Activated CD4-positive, alpha-beta memory T cell treated with anti-CD3 and anti-CD28 coated beads, Interleukin-2, amount 10 ng/mL, durations not matched to agents 7 days and 5 days (primary cell): ENCODE measurements at regions of chr17 and their contacts with region 1.

Region 1: DNA sequence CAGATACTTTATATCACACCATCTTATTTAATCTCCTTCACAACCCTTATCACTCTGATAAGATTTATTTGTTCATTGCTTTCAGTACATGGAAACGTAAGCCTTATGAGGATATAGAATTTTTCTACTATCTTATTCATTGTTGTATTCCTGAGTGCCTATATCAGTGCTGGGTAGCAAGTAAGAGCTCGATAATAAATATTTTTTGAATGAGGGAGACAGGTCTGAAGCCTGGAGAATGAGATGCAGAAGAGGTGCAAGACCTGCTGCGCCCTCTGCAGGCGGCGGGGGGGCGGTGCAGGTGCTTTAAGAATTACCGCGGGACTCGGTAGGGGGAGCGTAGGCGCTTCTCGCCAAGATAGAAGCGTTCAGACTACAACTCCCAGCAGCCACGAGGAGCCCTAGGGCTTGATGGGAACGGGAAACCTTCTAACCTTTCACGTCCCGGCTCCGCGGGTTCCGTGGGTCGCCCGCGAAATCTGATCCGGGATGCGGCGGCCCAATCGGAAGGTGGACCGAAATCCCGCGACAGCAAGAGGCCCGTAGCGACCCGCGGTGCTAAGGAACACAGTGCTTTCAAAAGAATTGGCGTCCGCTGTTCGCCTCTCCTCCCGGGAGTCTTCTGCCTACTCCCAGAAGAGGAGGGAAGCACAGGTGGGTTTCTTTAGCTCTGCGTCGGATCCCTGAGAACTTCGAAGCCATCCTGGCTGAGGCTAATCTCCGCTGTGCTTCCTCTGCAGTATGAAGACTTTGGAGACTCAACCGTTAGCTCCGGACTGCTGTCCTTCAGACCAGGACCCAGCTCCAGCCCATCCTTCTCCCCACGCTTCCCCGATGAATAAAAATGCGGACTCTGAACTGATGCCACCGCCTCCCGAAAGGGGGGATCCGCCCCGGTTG is at the start of gene WRAP53:
- DNase-seq: peak; percentile 97
- H3K4me3 Mint-ChIP-seq: peak within 1 kb of the TSS; percentile 94
- H3K27ac Mint-ChIP-seq: peak within 1 kb of the TSS; percentile 96
- H3K4me1 Mint-ChIP-seq: peaks cover 39% of the 10 kb centered on the region
- H3K27me3 Mint-ChIP-seq: no peaks in the 10 kb centered on the region
- total RNA-seq, gene WRAP53: 18.6 to 18.8 TPM

Region 2: DNA sequence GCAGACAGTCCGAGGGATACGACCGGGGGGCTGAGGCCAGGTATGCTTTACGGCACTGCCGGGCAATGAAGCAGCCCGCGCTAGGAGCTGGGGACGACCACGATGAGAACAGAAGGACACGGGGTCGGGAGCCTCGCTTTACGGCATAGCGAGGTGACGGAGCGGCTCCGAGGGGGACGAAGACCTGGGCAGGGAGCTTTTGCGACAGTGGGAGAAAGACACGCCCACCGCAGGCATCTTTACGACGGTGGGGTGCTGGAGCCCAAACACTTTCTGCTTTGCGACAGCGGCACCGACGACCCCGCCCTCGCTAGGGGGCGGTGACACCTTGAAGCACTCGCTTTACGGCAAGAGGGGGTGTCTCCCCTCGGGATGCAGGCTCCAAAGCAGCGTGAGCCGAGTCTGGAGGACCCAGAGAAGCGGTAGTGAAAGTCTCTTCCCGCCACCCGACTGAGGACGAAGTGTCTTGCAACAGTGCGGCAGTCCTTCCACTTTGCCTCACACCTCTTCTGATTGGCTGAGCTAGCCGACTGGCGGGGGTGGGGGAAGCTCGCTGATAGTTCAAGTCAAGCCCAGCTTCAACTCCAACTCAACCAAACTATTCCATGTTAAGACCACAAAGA is 358.7 kb before region 1 on chr17:
- CTCF ChIA-PET with region 1: interaction called, 9 read pairs
- POLR2A ChIA-PET with region 1: interaction called, 10 read pairs
- DNase-seq: peak; percentile 97
- H3K4me3 Mint-ChIP-seq: peak overlapping the region; percentile 85
- H3K27ac Mint-ChIP-seq: peak overlapping the region; percentile 93
- H3K4me1 Mint-ChIP-seq: peaks cover 49% of the 10 kb centered on the region
- H3K27me3 Mint-ChIP-seq: no peaks in the 10 kb centered on the region

Region 3: GRCh38 chr17:7561028-7561575 is 127.1 kb before region 1 on chr17:
- CTCF ChIA-PET with region 1: interaction called, 17 read pairs
- POLR2A ChIA-PET with region 1: interaction called, 26 read pairs
- DNase-seq: peak; percentile 85
- H3K4me3 Mint-ChIP-seq: peak overlapping the region; percentile 91
- H3K27ac Mint-ChIP-seq: peak overlapping the region; percentile 93
- H3K4me1 Mint-ChIP-seq: peaks cover 52% of the 10 kb centered on the region
- H3K27me3 Mint-ChIP-seq: no peaks in the 10 kb centered on the region

Region 4: GRCh38 chr17:7627250-7628121 is 60.7 kb before region 1 on chr17 and contains the start of gene SAT2:
- CTCF ChIA-PET with region 1: interaction called, 50 read pairs
- POLR2A ChIA-PET with region 1: interaction called, 63 read pairs
- DNase-seq: peak; percentile 88
- H3K4me3 Mint-ChIP-seq: peak within 1 kb of the TSS; percentile 92
- H3K27ac Mint-ChIP-seq: peak within 1 kb of the TSS; percentile 47
- H3K4me1 Mint-ChIP-seq: peaks cover 16% of the 10 kb centered on the region
- H3K27me3 Mint-ChIP-seq: no peaks in the 10 kb centered on the region
- total RNA-seq, gene SAT2: 36.2 to 37.9 TPM

Region 5: GRCh38 chr17:7703584-7704479 is 15.7 kb after region 1 on chr17:
- CTCF ChIA-PET with region 1: interaction called, 7 read pairs
- POLR2A ChIA-PET with region 1: interaction called, 32 read pairs
- DNase-seq: no peak
- H3K4me3 Mint-ChIP-seq: no peak overlapping the region
- H3K27ac Mint-ChIP-seq: no peak overlapping the region
- H3K4me1 Mint-ChIP-seq: peaks cover 10% of the 10 kb centered on the region
- H3K27me3 Mint-ChIP-seq: peaks cover 35% of the 10 kb centered on the region

Region 6: GRCh38 chr17:8118769-8119580 is 430.8 kb after region 1 on chr17:
- CTCF ChIA-PET with region 1: interaction called, 4 read pairs
- POLR2A ChIA-PET with region 1: interaction called, 17 read pairs
- DNase-seq: peak; percentile 86
- H3K4me3 Mint-ChIP-seq: peak overlapping the region; percentile 80
- H3K27ac Mint-ChIP-seq: peak overlapping the region; percentile 89
- H3K4me1 Mint-ChIP-seq: peaks cover 56% of the 10 kb centered on the region
- H3K27me3 Mint-ChIP-seq: peaks cover 60% of the 10 kb centered on the region